CD8-positive, alpha-beta T cell (primary cell): ENCODE measurements at regions of chr18 and their contacts with region 1.

Region 1: GRCh38 chr18:46073474-46074331 is 1.6 kb upstream of the PSTPIP2 start:
- DNase-seq: peak in 8 of 9 experiments; percentile 27 to 79 (median 56)
- ATAC-seq: peak; percentile 66
- H3K4me3 ChIP-seq: no peak overlapping the region
- H3K4me3 Mint-ChIP-seq: peak overlapping the region; percentile 86
- H3K27ac ChIP-seq: no peak overlapping the region
- H3K27ac Mint-ChIP-seq: no peak overlapping the region
- H3K4me1 ChIP-seq: peaks cover 21% of the 10 kb centered on the region
- H3K4me1 Mint-ChIP-seq: peaks cover 40% of the 10 kb centered on the region
- H3K27me3 ChIP-seq: no peaks in the 10 kb centered on the region
- H3K27me3 Mint-ChIP-seq: no peaks in the 10 kb centered on the region
- CTCF ChIP-seq: peak; percentile 89

Region 2: GRCh38 chr18:44482761-44483160 is 1590.9 kb before region 1 on chr18:
- CTCF ChIA-PET with region 1: no interaction called
- POLR2A ChIA-PET with region 1: no interaction called
- intact Hi-C with region 1: no loop called
- DNase-seq: no peak
- ATAC-seq: no peak
- H3K4me3 ChIP-seq: no peak overlapping the region
- H3K4me3 Mint-ChIP-seq: no peak overlapping the region
- H3K27ac ChIP-seq: no peak overlapping the region
- H3K27ac Mint-ChIP-seq: no peak overlapping the region
- H3K4me1 ChIP-seq: no peaks in the 10 kb centered on the region
- H3K4me1 Mint-ChIP-seq: no peaks in the 10 kb centered on the region
- H3K27me3 ChIP-seq: no peaks in the 10 kb centered on the region
- H3K27me3 Mint-ChIP-seq: no peaks in the 10 kb centered on the region
- CTCF ChIP-seq: no peak

Region 3: GRCh38 chr18:45566025-45566740 is 507.5 kb before region 1 on chr18:
- CTCF ChIA-PET with region 1: no interaction called
- POLR2A ChIA-PET with region 1: no interaction called
- intact Hi-C with region 1: no loop called
- DNase-seq: no peak
- ATAC-seq: no peak
- H3K4me3 ChIP-seq: no peak overlapping the region
- H3K4me3 Mint-ChIP-seq: no peak overlapping the region
- H3K27ac ChIP-seq: no peak overlapping the region
- H3K27ac Mint-ChIP-seq: no peak overlapping the region
- H3K4me1 ChIP-seq: no peaks in the 10 kb centered on the region
- H3K4me1 Mint-ChIP-seq: no peaks in the 10 kb centered on the region
- H3K27me3 ChIP-seq: no peaks in the 10 kb centered on the region
- H3K27me3 Mint-ChIP-seq: peaks cover 4% of the 10 kb centered on the region
- CTCF ChIP-seq: no peak

Region 4: DNA sequence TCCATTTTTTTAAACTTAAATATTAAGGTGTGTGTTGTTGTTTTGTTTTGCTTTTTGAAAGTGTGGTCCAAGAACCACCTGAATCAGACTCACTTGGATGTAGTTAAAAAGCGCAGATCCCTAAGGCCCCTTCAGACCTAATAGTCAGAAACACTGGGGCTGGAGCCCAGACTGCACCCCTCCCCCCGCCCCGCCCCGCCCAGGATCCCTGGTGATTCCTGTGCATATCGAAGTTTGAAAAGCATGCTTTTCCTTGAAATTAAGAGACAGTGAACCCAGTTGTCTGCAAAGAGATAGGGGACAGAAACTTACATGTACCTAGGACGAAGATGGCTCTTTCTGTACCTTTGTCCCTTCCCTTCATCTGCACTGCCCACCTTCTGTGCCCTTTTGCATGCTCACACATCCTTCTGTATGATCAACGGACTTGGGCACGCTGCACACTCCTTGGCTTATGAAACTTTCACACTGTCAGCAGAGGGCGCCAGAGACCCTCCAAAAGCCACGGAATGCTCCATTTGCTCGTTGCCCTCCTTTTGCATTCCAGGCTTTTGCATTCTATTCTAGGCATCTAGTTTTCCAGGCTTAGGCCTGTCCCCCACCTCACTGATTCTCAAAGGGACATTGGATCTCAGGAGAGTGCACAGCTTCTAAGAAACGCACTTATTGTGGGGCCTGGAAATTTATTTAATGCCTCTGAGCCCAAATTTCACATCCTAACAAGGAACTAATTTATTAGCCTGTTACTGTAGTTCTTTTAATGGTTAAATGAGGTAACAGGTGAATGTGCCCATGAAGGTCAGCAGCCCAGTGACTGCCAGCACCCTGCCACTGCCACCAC is 382.5 kb before region 1 on chr18:
- CTCF ChIA-PET with region 1: interaction called, 10 read pairs
- POLR2A ChIA-PET with region 1: no interaction called
- intact Hi-C with region 1: loop called (anchors 1 to 2 kb)
- DNase-seq: peak; percentile 58 to 88 (median 82)
- ATAC-seq: no peak
- H3K4me3 ChIP-seq: no peak overlapping the region
- H3K4me3 Mint-ChIP-seq: peak overlapping the region; percentile 35
- H3K27ac ChIP-seq: no peak overlapping the region
- H3K27ac Mint-ChIP-seq: no peak overlapping the region
- H3K4me1 ChIP-seq: peaks cover 49% of the 10 kb centered on the region
- H3K4me1 Mint-ChIP-seq: peaks cover 47% of the 10 kb centered on the region
- H3K27me3 ChIP-seq: no peaks in the 10 kb centered on the region
- H3K27me3 Mint-ChIP-seq: peaks cover 2% of the 10 kb centered on the region
- CTCF ChIP-seq: peak; percentile 81

Region 5: DNA sequence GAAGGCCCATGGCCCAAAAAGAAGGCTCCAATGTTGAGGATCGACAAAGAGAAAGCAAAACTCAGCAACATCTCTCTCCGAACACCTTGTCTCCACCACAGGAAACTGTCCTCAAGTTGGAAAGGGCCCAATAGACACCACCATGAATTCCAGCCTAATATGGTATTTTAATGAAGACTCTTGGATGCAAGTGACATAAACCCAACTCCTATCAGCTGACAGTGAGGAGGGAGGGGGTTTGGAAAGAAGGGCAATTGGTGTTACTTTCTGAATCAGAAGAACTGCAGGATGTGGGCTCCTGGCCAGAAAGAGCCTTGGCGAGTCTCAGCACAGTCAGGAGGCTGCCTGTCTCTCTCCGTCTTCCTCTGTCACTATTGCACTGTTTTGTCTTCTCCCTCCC is 288.6 kb before region 1 on chr18:
- CTCF ChIA-PET with region 1: no interaction called
- POLR2A ChIA-PET with region 1: no interaction called
- intact Hi-C with region 1: no loop called
- DNase-seq: peak in 4 of 9 experiments; percentile 9 to 64 (median 40)
- ATAC-seq: peak; percentile 52
- H3K4me3 ChIP-seq: no peak overlapping the region
- H3K4me3 Mint-ChIP-seq: peak overlapping the region; percentile 11
- H3K27ac ChIP-seq: no peak overlapping the region
- H3K27ac Mint-ChIP-seq: peak overlapping the region; percentile 34
- H3K4me1 ChIP-seq: no peaks in the 10 kb centered on the region
- H3K4me1 Mint-ChIP-seq: peaks cover 9% of the 10 kb centered on the region
- H3K27me3 ChIP-seq: no peaks in the 10 kb centered on the region
- H3K27me3 Mint-ChIP-seq: no peaks in the 10 kb centered on the region
- CTCF ChIP-seq: no peak

Region 6: DNA sequence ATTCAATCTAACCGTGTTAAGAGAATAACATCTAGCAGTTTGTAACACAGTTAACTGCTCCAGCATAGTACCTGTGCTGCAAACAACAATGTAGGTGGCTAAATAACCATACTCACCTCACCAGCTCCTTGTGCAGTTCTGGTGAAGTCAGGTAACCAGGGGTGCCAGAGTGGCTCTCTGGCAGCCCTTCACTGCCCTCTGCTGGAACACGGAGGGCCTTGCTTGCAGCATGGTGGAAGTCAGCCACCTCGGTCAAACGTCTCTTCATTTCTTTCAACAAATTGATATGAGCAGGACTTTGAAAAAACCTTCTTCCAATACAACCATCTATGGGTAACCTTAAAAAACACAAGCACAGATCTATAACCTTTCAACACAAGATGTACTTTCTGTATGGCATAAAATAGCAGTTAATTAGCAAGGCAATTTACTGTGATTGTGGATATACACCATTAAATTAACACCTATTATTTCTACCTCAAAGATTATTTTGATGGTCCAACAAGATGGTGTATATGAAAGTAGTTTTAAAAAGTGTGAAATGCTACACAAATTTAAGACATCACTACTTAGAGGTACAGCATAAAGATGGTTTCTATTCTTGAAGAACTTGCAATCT is 163.2 kb before region 1 on chr18:
- CTCF ChIA-PET with region 1: interaction called, 7 read pairs
- POLR2A ChIA-PET with region 1: no interaction called
- intact Hi-C with region 1: loop called in 1 of 2 experiments (anchors 5 kb)
- DNase-seq: peak; percentile 35 to 73 (median 63)
- ATAC-seq: peak; percentile 84
- H3K4me3 ChIP-seq: no peak overlapping the region
- H3K4me3 Mint-ChIP-seq: no peak overlapping the region
- H3K27ac ChIP-seq: no peak overlapping the region
- H3K27ac Mint-ChIP-seq: no peak overlapping the region
- H3K4me1 ChIP-seq: no peaks in the 10 kb centered on the region
- H3K4me1 Mint-ChIP-seq: no peaks in the 10 kb centered on the region
- H3K27me3 ChIP-seq: no peaks in the 10 kb centered on the region
- H3K27me3 Mint-ChIP-seq: no peaks in the 10 kb centered on the region
- CTCF ChIP-seq: peak; percentile 71

Region 7: GRCh38 chr18:45967007-45967706 is 106.5 kb before region 1 on chr18 and contains the start of gene EPG5:
- CTCF ChIA-PET with region 1: interaction called, 10 read pairs
- POLR2A ChIA-PET with region 1: interaction called, 4 read pairs
- intact Hi-C with region 1: loop called in 1 of 2 experiments (anchors 2 kb)
- DNase-seq: peak; percentile 75 to 94 (median 90)
- ATAC-seq: peak; percentile 91
- H3K4me3 ChIP-seq: peak within 1 kb of the TSS; percentile 79 to 91
- H3K4me3 Mint-ChIP-seq: peak within 1 kb of the TSS; percentile 98
- H3K27ac ChIP-seq: peak within 1 kb of the TSS; percentile 68 to 74
- H3K27ac Mint-ChIP-seq: peak within 1 kb of the TSS; percentile 91
- H3K4me1 ChIP-seq: peaks cover 33% of the 10 kb centered on the region
- H3K4me1 Mint-ChIP-seq: peaks cover 46% of the 10 kb centered on the region
- H3K27me3 ChIP-seq: no peaks in the 10 kb centered on the region
- H3K27me3 Mint-ChIP-seq: no peaks in the 10 kb centered on the region
- CTCF ChIP-seq: no peak
- total RNA-seq, gene EPG5: 29.1 to 35.5 TPM

Region 8: GRCh38 chr18:46028536-46028891 is 45.2 kb before region 1 on chr18:
- CTCF ChIA-PET with region 1: interaction called, 6 read pairs
- POLR2A ChIA-PET with region 1: interaction called, 3 read pairs
- intact Hi-C with region 1: loop called (anchors 1 to 2 kb)
- DNase-seq: no peak
- ATAC-seq: no peak
- H3K4me3 ChIP-seq: peak overlapping the region; percentile 66 to 75
- H3K4me3 Mint-ChIP-seq: peak overlapping the region; percentile 94
- H3K27ac ChIP-seq: no peak overlapping the region
- H3K27ac Mint-ChIP-seq: peak overlapping the region; percentile 68
- H3K4me1 ChIP-seq: no peaks in the 10 kb centered on the region
- H3K4me1 Mint-ChIP-seq: peaks cover 9% of the 10 kb centered on the region
- H3K27me3 ChIP-seq: no peaks in the 10 kb centered on the region
- H3K27me3 Mint-ChIP-seq: no peaks in the 10 kb centered on the region
- CTCF ChIP-seq: no peak